Heart right ventricle (tissue), 16 donors: ENCODE measurements at regions of chr12 and their contacts with region 1.

Region 1: GRCh38 chr12:89542912-89543592 is 17.2 kb upstream of the POC1B start:
- DNase-seq: peak in 1 of 2 donors; percentile 74
- ATAC-seq: peak; percentile 56 to 86 (median 74)
- H3K4me3 ChIP-seq: no peak overlapping the region
- H3K27ac ChIP-seq: no peak overlapping the region
- H3K4me1 ChIP-seq: peaks cover 0 to 30% (median 21%) of the 10 kb centered on the region in 9 donors
- H3K27me3 ChIP-seq: no peaks in the 10 kb centered on the region
- CTCF ChIP-seq: peak; percentile 72 to 96 (median 91)

Region 2: DNA sequence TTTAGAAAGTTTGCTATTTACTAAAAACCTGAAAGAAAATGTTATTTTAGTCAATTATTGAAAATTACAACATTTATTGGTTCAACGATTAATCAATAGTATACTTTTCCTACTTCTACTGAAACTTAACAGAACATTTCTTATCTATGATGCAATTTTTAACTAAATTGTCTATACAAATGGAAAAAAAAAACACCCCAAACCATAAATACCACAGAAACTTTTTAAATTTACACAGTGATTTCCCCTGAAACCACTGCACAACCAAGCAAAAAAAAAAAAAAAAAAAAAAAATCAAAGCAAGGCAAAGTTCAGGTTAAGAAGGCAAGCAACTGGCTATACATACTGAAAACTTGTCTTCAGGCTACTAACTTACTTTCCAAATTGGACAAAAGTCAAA is 54.7 kb after region 1 on chr12:
- intact Hi-C with region 1: no loop called
- DNase-seq: no peak
- ATAC-seq: no peak
- H3K4me3 ChIP-seq: no peak overlapping the region
- H3K27ac ChIP-seq: no peak overlapping the region
- H3K4me1 ChIP-seq: no peaks in the 10 kb centered on the region
- H3K27me3 ChIP-seq: no peaks in the 10 kb centered on the region
- CTCF ChIP-seq: no peak

Region 3: DNA sequence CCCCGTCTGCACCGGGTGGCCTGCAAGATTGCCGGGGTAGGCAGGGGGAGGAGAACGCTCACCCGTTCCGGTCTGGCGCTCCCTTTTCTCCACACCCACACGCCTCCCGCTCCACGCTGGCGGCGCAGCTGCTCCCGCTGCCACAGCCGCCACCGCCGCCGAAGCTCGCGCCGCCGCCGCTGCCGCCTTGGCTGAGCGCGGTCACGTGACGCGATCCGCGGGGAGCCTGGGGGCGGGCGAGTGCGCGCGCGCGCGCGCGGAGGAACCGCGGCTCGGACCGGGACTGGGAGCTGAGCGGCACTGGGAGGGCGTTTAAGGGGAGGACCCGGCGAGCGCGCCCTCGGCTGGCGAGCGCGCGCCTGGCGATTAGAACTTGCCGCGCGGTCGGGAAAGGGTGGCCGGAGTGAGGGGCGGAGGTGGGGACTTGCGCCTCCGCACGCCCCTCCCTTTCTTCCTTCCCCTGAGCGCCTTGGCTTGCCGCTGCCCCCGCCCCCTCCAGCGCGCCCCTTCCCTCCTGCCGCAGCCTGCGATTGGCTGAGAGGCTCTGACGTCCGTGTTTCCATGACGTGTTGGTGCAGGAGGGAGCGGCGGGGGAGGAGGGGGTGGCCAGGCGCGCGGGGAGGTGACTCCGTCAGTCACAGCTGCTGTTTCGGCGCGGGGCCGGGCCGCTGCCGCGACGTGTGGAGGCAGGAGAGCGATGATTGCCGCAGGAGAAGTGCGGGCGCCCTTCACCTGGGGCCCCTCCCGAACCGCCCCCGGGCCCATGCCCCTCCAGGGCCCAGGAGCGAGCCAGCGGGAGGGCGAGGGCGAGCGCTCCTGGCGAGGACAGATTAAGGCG is 166.3 kb after region 1 on chr12:
- intact Hi-C with region 1: loop called in 5 of 10 experiments (anchors 5 to 10 kb)
- DNase-seq: peak; percentile 99 to 100
- ATAC-seq: peak; percentile 90 to 98 (median 97)
- H3K4me3 ChIP-seq: peak overlapping the region; percentile 76 to 99 (median 88)
- H3K27ac ChIP-seq: peak overlapping the region; percentile 95 to 100 (median 98)
- H3K4me1 ChIP-seq: peaks cover 0 to 28% (median 18%) of the 10 kb centered on the region in 9 donors
- H3K27me3 ChIP-seq: no peaks in the 10 kb centered on the region
- CTCF ChIP-seq: peak in 1 of 9 donors; percentile 15

Region 4: GRCh38 chr12:89949457-89950195 is 406.6 kb after region 1 on chr12:
- intact Hi-C with region 1: no loop called
- DNase-seq: peak in 1 of 2 donors; percentile 66
- ATAC-seq: peak; percentile 47 to 92 (median 85)
- H3K4me3 ChIP-seq: no peak overlapping the region
- H3K27ac ChIP-seq: peak overlapping the region in 5 of 10 donors; percentile 4 to 70 (median 19)
- H3K4me1 ChIP-seq: peaks cover 5 to 40% (median 14%) of the 10 kb centered on the region in 9 donors
- H3K27me3 ChIP-seq: no peaks in the 10 kb centered on the region
- CTCF ChIP-seq: peak in 5 of 9 donors; percentile 14 to 52 (median 20)

Region 5: GRCh38 chr12:90024287-90024686 is 481.2 kb after region 1 on chr12:
- intact Hi-C with region 1: no loop called
- DNase-seq: no peak
- ATAC-seq: no peak
- H3K4me3 ChIP-seq: no peak overlapping the region
- H3K27ac ChIP-seq: no peak overlapping the region
- H3K4me1 ChIP-seq: peaks cover 0 to 11% (median 0%) of the 10 kb centered on the region in 9 donors
- H3K27me3 ChIP-seq: no peaks in the 10 kb centered on the region
- CTCF ChIP-seq: no peak

Region 6: GRCh38 chr12:90102957-90103652 is 560.1 kb after region 1 on chr12:
- intact Hi-C with region 1: loop called in 9 of 10 experiments (anchors 5 to 10 kb)
- DNase-seq: no peak
- ATAC-seq: peak in 1 of 8 donors; percentile 42
- H3K4me3 ChIP-seq: no peak overlapping the region
- H3K27ac ChIP-seq: no peak overlapping the region
- H3K4me1 ChIP-seq: peaks cover 0 to 5% (median 0%) of the 10 kb centered on the region in 9 donors
- H3K27me3 ChIP-seq: no peaks in the 10 kb centered on the region
- CTCF ChIP-seq: peak; percentile 17 to 66 (median 48)

Region 7: DNA sequence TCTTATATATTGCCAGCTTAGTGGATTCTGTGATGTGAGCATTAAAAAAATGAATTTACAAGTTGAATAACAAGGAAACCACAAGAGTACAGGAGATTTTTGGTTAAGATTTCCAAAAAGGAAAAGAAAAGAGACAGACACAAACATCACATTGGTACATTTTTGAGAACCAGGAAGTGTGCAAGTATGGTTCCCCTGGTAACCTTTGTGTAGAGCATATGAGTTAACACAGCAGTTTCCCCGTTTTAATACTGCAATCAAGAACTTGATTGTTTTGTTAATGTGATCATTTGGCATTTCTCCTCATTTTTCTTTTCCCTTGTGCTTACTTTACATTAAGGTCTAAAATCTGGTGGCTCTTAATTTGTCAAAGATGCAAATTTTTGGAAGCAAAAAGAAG is 656.0 kb after region 1 on chr12:
- intact Hi-C with region 1: no loop called
- DNase-seq: no peak
- ATAC-seq: peak in 2 of 8 donors; percentile 37 to 64
- H3K4me3 ChIP-seq: no peak overlapping the region
- H3K27ac ChIP-seq: no peak overlapping the region
- H3K4me1 ChIP-seq: peaks cover 0 to 19% (median 8%) of the 10 kb centered on the region in 9 donors
- H3K27me3 ChIP-seq: no peaks in the 10 kb centered on the region
- CTCF ChIP-seq: no peak

Region 8: GRCh38 chr12:90333939-90334338 is 790.9 kb after region 1 on chr12:
- intact Hi-C with region 1: loop called in 1 of 10 experiments (anchors 10 kb)
- DNase-seq: no peak
- ATAC-seq: no peak
- H3K4me3 ChIP-seq: no peak overlapping the region
- H3K27ac ChIP-seq: no peak overlapping the region
- H3K4me1 ChIP-seq: peaks cover 0 to 11% (median 0%) of the 10 kb centered on the region in 9 donors
- H3K27me3 ChIP-seq: no peaks in the 10 kb centered on the region
- CTCF ChIP-seq: no peak

Region 9: DNA sequence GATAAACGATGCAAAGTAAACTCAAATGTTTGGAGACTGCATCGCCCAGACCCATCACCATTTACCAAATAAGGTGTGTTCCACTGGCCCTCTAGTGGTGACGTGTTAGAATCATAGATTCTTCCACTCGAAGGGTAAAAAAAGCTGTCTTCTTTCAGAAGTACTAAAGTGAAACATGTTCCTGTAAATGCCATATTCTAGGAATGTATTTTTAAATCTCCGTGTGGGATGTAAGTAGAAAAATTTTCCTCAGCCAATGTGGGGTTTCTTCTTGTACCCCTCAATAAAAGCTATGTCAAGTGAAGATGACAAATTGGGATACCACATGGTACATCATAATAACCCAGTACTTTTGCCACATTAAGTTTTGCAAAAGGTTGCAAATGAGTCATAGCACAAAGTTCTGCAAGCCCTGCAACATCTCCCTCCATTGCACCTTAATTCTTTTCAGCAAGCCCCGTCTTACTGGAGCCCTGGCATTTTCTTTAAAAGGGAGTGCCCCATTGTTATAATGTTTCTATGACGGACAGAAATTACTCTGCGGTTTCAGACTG is 1311.2 kb after region 1 on chr12:
- intact Hi-C with region 1: loop called in 4 of 10 experiments (anchors 5 to 10 kb)
- DNase-seq: peak in 1 of 2 donors; percentile 26
- ATAC-seq: peak in 2 of 8 donors; percentile 42 to 65
- H3K4me3 ChIP-seq: no peak overlapping the region
- H3K27ac ChIP-seq: no peak overlapping the region
- H3K4me1 ChIP-seq: peaks cover 0 to 17% (median 3%) of the 10 kb centered on the region in 9 donors
- H3K27me3 ChIP-seq: no peaks in the 10 kb centered on the region
- CTCF ChIP-seq: peak; percentile 48 to 82 (median 71)

Region 10: GRCh38 chr12:90938451-90938850 is 1395.4 kb after region 1 on chr12:
- intact Hi-C with region 1: loop called in 2 of 10 experiments (anchors 10 kb)
- DNase-seq: no peak
- ATAC-seq: no peak
- H3K4me3 ChIP-seq: no peak overlapping the region
- H3K27ac ChIP-seq: no peak overlapping the region
- H3K4me1 ChIP-seq: no peaks in the 10 kb centered on the region
- H3K27me3 ChIP-seq: no peaks in the 10 kb centered on the region
- CTCF ChIP-seq: no peak